ENCODE measurements at regions of chr14 and their contacts with region 1.

Region 1: DNA sequence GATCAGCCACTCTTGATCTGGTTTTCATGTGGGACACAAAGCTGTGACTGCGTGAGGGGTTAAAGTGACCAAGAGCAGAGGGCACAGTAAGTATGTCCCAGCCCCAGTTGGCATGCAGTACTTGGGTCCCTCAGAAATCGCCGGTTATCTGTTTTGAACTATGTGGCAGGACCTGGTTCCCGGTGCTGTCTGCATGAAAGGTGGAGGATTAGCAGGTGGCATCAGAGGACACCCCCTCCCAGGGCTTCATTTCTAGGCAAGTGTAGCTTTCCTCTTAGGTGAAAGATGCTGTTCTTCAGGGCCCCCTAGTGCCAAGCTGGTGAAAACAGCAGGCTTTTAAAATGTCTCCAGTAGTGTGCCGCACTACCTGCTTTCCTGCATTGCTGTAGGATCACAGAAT is 57.1 kb downstream of the ATG14 start:
- DNase-seq: no peak
- ATAC-seq: peak; percentile 97
- H3K4me3 ChIP-seq: no peak overlapping the region
- H3K27ac ChIP-seq: no peak overlapping the region
- H3K4me1 ChIP-seq: peaks cover 2% of the 10 kb centered on the region
- H3K27me3 ChIP-seq: no peaks in the 10 kb centered on the region
- CTCF ChIP-seq: peak; percentile 70 to 85 (median 72)
- EP300 ChIP-seq: no peak
- POLR2A ChIP-seq: no peak
- RAD21 ChIP-seq: peak; percentile 93

Region 2: DNA sequence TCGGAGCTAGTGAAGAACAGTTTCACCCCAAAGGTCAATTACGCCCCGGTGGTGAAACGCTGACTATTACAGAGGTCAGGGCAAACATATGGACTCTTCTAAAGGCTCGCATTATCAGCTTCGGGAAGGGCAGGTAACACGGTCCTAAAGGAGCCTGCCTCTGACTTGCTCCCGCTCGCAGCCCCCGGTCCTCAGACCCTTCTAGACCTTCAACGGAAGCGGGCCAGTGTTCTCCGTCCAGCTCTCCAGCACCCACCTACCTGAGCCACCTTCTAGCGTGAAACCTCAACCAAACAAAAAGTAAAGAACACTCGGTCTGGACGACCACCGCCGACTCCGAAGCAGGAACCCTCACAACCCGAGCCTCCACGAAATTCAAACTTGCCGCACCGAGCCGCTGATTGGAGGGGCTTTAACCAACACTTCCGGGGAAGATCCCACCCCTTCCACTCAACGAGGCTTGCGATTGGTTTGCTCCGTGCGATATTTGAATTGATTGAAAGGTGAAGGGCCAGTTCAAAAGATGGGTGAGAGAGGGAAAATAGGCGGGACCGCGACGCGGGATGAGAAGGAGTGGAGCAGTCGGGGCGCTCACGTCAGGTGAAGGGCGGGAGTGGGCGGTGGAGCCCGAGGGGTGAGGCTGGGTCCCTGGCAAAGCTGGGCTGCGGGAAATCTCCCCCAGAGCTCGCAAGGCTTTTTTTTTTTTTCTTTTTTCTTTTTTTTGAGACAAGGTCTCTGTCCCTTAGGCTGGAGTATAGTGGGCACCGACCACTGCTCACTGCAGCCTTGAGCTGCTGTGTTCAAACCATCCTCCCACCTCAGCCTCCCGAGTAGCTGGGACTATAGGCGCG is 163.1 kb before region 1 on chr14 and contains the start of gene DLGAP5:
- CTCF ChIA-PET with region 1: interaction called, 10 read pairs
- POLR2A ChIA-PET with region 1: no interaction called
- RAD21 ChIA-PET with region 1: interaction called, 3 read pairs
- SMC1A ChIA-PET with region 1: interaction called, 5 read pairs
- in situ Hi-C with region 1: no loop called
- intact Hi-C with region 1: no loop called
- DNase-seq: peak; percentile 98
- ATAC-seq: peak; percentile 98
- H3K4me3 ChIP-seq: peak within 1 kb of the TSS; percentile 85
- H3K27ac ChIP-seq: peak within 1 kb of the TSS; percentile 77
- H3K4me1 ChIP-seq: peaks cover 4% of the 10 kb centered on the region; the same call in 1 of the 2 replicates
- H3K27me3 ChIP-seq: no peaks in the 10 kb centered on the region
- CTCF ChIP-seq: no peak
- EP300 ChIP-seq: no peak
- POLR2A ChIP-seq: peak; percentile 77
- RAD21 ChIP-seq: no peak
- polyA plus RNA-seq, gene DLGAP5: 57.9 to 68.4 TPM

Region 3: DNA sequence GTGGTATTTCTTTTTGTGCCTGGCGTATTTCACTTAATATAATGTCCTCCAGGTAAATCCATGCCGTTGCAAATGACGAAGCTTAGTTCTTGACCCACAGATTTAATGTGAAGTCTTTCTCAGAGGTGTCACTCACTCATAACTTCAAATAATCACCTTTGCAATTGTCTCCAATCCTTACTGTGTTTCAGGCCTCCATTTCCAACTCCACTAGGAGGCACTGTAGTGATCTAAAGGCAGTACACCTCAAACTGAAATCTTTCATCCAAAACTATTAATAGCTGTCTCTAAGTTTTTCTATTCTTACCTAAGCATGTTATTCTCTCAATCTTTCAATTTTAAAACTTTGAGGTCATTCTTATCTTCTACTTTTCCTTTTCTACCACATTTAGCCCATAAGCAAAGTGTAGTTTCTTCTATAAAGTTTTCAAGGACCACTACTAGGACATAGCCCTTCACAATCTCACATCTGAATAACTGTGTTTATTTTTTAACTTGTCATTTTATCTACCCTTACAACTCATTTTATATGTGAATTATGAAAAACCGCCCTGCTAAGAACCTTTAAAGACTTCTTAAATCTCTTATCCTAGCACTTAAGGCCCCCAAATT is 108.7 kb before region 1 on chr14:
- CTCF ChIA-PET with region 1: interaction called, 59 read pairs
- POLR2A ChIA-PET with region 1: no interaction called
- RAD21 ChIA-PET with region 1: interaction called, 27 read pairs
- SMC1A ChIA-PET with region 1: interaction called, 32 read pairs
- in situ Hi-C with region 1: no loop called
- intact Hi-C with region 1: loop called (anchors 1 kb)
- DNase-seq: no peak
- ATAC-seq: peak; percentile 83
- H3K4me3 ChIP-seq: no peak overlapping the region
- H3K27ac ChIP-seq: no peak overlapping the region
- H3K4me1 ChIP-seq: no peaks in the 10 kb centered on the region
- H3K27me3 ChIP-seq: no peaks in the 10 kb centered on the region
- CTCF ChIP-seq: peak; percentile 57 to 68 (median 64); a peak in 5 of 6 replicates
- EP300 ChIP-seq: no peak
- POLR2A ChIP-seq: no peak
- RAD21 ChIP-seq: peak; percentile 68

Region 4: DNA sequence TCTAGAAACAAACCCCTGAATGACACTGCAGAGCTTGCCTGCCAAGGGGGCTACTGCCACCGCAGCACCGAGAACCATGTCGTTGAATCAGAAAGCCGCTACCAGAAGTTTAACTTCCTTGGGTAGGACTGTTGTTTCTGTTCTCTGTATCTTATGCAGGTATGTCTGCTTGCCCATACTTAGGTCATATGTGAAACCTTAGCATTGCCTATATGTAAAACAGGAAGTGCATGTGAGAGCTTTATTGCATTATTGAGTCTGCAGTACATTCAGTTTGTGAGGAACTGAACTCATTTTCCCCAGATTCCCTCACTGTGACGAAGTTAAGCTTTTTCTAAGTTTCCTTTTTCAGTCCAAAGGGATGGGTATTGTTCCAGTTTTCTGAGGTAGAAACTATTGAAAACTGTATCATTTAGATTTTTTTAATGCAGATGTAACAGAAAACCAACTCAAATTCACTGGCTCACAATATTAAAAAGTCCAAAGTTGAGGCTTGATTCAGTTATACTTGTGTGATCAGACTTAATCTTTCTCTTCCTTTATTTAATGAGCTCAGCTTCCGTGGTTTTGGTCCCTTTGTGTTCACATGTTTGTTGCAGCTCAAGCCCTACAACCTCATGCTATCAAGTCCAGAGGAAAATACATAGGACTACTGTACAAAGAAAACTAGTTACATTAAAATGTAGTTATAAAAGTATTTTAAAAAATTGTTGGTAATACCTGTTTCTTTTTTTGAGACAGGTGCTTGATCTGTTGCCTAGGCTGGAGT is 76.3 kb before region 1 on chr14:
- CTCF ChIA-PET with region 1: interaction called, 255 read pairs
- POLR2A ChIA-PET with region 1: interaction called, 6 read pairs
- RAD21 ChIA-PET with region 1: interaction called, 65 read pairs
- SMC1A ChIA-PET with region 1: interaction called, 161 read pairs
- in situ Hi-C with region 1: loop called (anchors 5 kb)
- intact Hi-C with region 1: no loop called
- DNase-seq: no peak
- ATAC-seq: peak; percentile 84
- H3K4me3 ChIP-seq: peak overlapping the region; percentile 38; the same call in 1 of the 2 replicates
- H3K27ac ChIP-seq: peak overlapping the region; percentile 84
- H3K4me1 ChIP-seq: peaks cover 46% of the 10 kb centered on the region
- H3K27me3 ChIP-seq: no peaks in the 10 kb centered on the region
- CTCF ChIP-seq: no peak
- EP300 ChIP-seq: no peak
- POLR2A ChIP-seq: no peak
- RAD21 ChIP-seq: no peak

Region 5: DNA sequence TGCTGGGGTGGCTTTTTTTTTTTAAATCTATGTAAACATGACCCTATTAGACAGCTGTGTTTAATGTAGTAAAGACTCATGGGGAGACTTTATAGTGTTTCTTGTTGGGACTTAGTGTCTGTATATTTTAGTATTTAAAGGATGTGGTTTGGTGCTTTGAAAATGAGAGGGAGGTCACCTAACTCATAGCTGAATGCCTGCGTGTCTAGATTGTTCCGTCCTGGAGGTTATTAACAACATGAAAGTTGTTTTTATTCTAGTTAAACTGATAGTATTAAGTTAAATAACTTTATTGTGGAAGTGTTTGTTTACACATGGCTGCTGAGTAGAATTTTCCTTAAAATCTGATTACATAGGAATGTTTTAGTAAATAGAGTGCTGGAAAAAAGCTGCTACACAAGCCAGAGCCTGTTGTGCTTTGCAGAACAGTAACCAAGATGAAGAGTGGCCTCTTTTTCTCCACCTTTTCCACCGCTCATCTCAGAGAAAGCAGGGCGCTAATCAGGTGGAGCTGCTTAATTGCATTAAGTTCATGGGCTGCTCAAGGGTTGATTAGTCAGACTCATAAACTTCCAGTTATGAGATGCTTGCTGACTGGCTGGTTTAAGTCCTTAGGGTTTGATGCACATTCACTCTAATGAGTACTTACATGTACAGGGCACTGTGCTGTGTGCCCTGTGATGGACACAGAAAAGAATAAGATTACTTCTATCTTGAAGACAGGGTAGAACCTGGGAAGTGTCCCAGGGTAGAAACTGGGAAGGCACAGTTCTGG is 20.6 kb before region 1 on chr14:
- CTCF ChIA-PET with region 1: interaction called, 11 read pairs
- POLR2A ChIA-PET with region 1: interaction called, 5 read pairs
- RAD21 ChIA-PET with region 1: interaction called, 23 read pairs
- SMC1A ChIA-PET with region 1: interaction called, 41 read pairs
- in situ Hi-C with region 1: no loop called
- intact Hi-C with region 1: no loop called
- DNase-seq: no peak
- ATAC-seq: peak; percentile 81
- H3K4me3 ChIP-seq: no peak overlapping the region
- H3K27ac ChIP-seq: peak overlapping the region; percentile 71; the same call in 1 of the 2 replicates
- H3K4me1 ChIP-seq: peaks cover 26% of the 10 kb centered on the region
- H3K27me3 ChIP-seq: no peaks in the 10 kb centered on the region
- CTCF ChIP-seq: no peak
- EP300 ChIP-seq: no peak
- POLR2A ChIP-seq: no peak
- RAD21 ChIP-seq: no peak

Region 6: GRCh38 chr14:55366271-55366670 is 11.8 kb after region 1 on chr14:
- CTCF ChIA-PET with region 1: interaction called, 28 read pairs
- POLR2A ChIA-PET with region 1: no interaction called
- RAD21 ChIA-PET with region 1: interaction called, 4 read pairs
- SMC1A ChIA-PET with region 1: interaction called, 9 read pairs
- in situ Hi-C with region 1: no loop called
- intact Hi-C with region 1: no loop called
- DNase-seq: no peak
- ATAC-seq: no peak
- H3K4me3 ChIP-seq: no peak overlapping the region
- H3K27ac ChIP-seq: no peak overlapping the region
- H3K4me1 ChIP-seq: no peaks in the 10 kb centered on the region
- H3K27me3 ChIP-seq: no peaks in the 10 kb centered on the region
- CTCF ChIP-seq: no peak
- EP300 ChIP-seq: no peak
- POLR2A ChIP-seq: no peak
- RAD21 ChIP-seq: no peak

Measured in GM12878 (cell line).